ENCODE measurements at regions of chr3 and their contacts with region 1.

Region 1: DNA sequence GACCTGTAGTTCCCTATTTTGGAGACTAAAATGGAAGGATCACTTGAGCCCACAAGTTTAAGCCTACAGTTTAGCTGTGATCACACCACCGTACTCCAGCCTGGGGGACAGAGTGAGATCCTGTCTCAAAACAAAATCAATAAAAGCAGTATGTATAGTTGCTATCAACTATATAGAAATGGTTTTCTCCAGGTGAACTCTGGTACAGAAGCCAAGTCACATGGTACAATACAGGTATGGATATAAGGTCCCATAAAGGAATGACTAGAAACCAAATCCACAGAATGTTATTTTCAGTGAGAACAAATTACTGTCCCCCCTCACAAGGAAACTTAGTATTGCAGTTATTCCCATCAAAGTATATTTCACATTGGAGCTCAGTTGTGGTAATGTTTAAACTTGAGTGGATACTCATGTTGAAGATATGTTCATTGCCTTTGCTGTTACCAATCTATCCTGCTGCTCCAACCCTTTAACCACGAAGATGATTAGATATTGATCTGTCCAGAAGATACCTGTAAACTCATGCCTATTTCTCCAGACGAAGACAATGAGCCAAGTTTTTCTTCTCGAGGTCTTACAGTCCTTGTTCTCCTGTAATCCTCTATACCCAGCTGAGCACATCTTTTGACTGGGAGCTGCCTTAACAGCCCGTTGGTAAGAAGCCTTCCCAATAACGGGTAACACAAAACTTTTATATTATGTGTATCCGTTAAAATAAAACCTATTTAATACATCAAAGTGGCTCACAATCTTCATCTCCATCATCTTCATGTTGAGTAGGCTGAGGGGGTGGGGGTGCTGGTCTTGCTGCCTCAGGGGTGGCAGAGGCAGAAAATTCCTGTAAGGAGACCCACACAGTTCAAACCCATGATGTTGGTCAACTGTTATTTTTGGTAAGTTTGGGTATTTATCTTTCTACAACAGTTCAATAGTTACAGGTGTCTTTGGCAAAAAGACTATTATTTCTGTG is 24.6 kb downstream of the TRA2B start:
- DNase-seq: no peak
- H3K4me3 ChIP-seq: no peak overlapping the region
- H3K27ac ChIP-seq: no peak overlapping the region
- H3K4me1 ChIP-seq: no peaks in the 10 kb centered on the region
- H3K27me3 ChIP-seq: no peaks in the 10 kb centered on the region
- CTCF ChIP-seq: no peak
- POLR2A ChIP-seq: peak; percentile 65

Region 2: GRCh38 chr3:185924375-185924774 is 11.2 kb after region 1 on chr3:
- CTCF ChIA-PET with region 1: interaction called, 11 read pairs
- POLR2A ChIA-PET with region 1: no interaction called
- dilution Hi-C with region 1: no loop called
- intact Hi-C with region 1: no loop called
- DNase-seq: no peak
- H3K4me3 ChIP-seq: no peak overlapping the region
- H3K27ac ChIP-seq: no peak overlapping the region
- H3K4me1 ChIP-seq: peaks cover 23% of the 10 kb centered on the region
- H3K27me3 ChIP-seq: no peaks in the 10 kb centered on the region
- CTCF ChIP-seq: no peak
- POLR2A ChIP-seq: no peak

Region 3: GRCh38 chr3:185976977-185977678 is 63.9 kb after region 1 on chr3:
- CTCF ChIA-PET with region 1: no interaction called
- POLR2A ChIA-PET with region 1: no interaction called
- dilution Hi-C with region 1: no loop called
- intact Hi-C with region 1: no loop called
- DNase-seq: peak; percentile 75
- H3K4me3 ChIP-seq: no peak overlapping the region
- H3K27ac ChIP-seq: no peak overlapping the region
- H3K4me1 ChIP-seq: peaks cover 6% of the 10 kb centered on the region
- H3K27me3 ChIP-seq: no peaks in the 10 kb centered on the region
- CTCF ChIP-seq: peak; percentile 85 to 93
- POLR2A ChIP-seq: no peak